ENCODE measurements at regions of chr3 and their contacts with region 1.

Region 1: DNA sequence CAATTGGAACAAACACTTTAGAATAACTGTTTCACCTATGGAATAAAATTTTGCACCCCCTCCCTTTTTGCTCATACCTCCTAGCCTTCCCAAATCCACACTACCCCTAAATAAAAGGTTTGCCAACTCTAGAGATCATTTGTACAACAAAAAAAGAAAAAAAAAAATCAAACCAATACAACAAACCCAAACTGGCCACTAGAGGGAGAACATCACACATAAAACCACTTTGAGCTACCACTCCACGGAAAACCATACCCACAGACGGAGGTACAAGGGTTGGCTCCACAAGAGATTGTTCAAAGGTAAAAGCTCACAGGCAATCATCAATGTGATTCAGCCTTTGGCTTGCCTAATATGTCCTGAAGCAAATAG is 47.6 kb downstream of the SETMAR start:
- DNase-seq: peak; percentile 29 to 63
- H3K4me3 ChIP-seq: peak overlapping the region; percentile 18 to 23
- H3K27ac ChIP-seq: peak overlapping the region; percentile 73 to 82
- H3K4me1 ChIP-seq: no peaks in the 10 kb centered on the region
- H3K27me3 ChIP-seq: no peaks in the 10 kb centered on the region
- CTCF ChIP-seq: peak; percentile 65 to 81 (median 68)
- POLR2A ChIP-seq: no peak

Region 2: DNA sequence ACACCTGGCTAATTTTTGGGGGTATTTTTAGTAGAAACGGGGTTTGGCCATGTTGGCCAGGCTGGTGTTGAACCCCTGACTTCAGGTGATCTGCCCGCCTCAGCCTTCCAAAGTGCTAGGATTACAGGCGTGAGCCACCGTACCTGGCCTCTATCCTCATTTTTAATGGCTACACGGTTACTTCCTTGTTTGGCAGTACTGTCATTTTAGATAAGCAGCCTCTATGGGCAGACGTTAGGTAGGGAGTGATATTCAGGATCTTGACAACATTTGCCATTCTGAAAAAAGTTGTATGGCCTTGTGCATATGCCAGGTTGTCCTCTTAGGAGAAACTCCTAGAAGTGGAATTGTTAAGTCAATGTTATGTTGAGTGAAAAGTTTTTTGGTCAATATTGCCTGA is 284.1 kb after region 1 on chr3:
- intact Hi-C with region 1: loop called (anchors 5 kb)
- DNase-seq: no peak
- H3K4me3 ChIP-seq: no peak overlapping the region
- H3K27ac ChIP-seq: no peak overlapping the region
- H3K4me1 ChIP-seq: peaks cover 0 to 5% of the 10 kb centered on the region in 2 donors
- H3K27me3 ChIP-seq: no peaks in the 10 kb centered on the region
- CTCF ChIP-seq: no peak
- POLR2A ChIP-seq: no peak